Ovary (tissue), 10 donors: ENCODE measurements at regions of chr10 and their contacts with region 1.

Region 1: DNA sequence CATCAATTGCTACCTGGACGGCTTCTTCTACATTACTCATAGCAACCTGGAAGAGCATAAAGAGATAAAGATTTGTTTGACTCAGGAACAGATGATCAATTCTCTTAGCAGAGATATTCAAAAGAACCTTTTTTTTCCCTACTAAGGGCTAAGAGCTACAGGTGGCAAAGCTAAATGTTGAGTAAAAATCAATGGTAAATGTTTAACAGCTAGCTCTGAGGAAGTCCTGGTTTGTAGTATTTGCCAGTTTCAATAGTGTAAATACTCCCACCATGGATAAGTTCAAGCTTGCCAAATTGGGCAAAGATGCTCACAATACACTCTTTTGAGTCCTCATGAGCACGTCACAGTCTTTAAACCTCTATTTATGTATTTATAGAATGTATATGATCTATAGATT is 64.0 kb downstream of the AKR1E2 start:
- DNase-seq: no peak
- H3K4me3 ChIP-seq: no peak overlapping the region
- H3K27ac ChIP-seq: no peak overlapping the region
- H3K4me1 ChIP-seq: peaks cover 2% of the 10 kb centered on the region
- H3K27me3 ChIP-seq: peaks cover 2% of the 10 kb centered on the region
- CTCF ChIP-seq: no peak
- EP300 ChIP-seq: no peak
- POLR2A ChIP-seq: no peak

Region 2: GRCh38 chr10:4303048-4303447 is 586.9 kb before region 1 on chr10:
- intact Hi-C with region 1: no loop called
- DNase-seq: no peak
- H3K4me3 ChIP-seq: no peak overlapping the region
- H3K27ac ChIP-seq: no peak overlapping the region
- H3K4me1 ChIP-seq: peaks cover 5% of the 10 kb centered on the region
- H3K27me3 ChIP-seq: no peaks in the 10 kb centered on the region
- CTCF ChIP-seq: no peak
- EP300 ChIP-seq: no peak
- POLR2A ChIP-seq: no peak

Region 3: DNA sequence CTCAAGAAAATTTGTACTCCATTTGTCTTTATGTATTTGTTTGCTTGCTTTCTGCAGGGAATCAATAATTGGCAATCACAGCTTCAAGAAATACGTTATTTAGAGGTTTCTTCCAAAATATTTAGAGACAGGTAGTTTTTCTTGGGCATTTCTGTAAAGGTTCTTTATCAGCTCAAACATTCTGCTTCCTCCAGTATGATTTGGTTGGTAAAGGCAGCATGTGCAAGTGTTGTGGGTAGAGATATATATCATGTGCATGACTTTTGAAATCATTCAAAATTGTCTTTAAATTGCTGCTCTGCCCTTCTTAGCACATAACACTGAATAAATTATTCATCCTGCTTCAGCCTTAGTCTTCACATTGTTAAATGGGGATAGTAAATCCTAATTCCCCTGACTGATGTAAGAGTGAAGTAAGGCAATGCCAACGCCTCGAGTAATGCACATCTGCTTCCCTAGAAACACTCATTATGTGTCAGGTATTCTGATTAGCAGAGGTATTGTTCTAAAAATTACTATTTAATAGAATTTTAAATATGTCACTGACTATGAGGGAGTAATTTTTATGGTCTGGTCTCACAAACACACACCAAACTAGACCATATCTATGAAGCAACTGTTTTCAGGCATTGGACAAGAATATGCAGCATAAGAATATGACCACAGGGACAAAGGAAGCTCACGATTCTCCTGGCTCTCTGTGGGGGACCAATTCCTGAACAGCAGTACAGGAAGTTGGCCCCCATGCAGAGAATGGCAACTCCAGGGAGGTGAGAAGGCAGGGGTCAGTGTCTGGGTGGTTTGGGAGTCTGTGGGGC is 141.3 kb before region 1 on chr10:
- intact Hi-C with region 1: no loop called
- DNase-seq: no peak
- H3K4me3 ChIP-seq: no peak overlapping the region
- H3K27ac ChIP-seq: no peak overlapping the region
- H3K4me1 ChIP-seq: no peaks in the 10 kb centered on the region
- H3K27me3 ChIP-seq: no peaks in the 10 kb centered on the region
- CTCF ChIP-seq: no peak
- EP300 ChIP-seq: no peak
- POLR2A ChIP-seq: no peak

Region 4: DNA sequence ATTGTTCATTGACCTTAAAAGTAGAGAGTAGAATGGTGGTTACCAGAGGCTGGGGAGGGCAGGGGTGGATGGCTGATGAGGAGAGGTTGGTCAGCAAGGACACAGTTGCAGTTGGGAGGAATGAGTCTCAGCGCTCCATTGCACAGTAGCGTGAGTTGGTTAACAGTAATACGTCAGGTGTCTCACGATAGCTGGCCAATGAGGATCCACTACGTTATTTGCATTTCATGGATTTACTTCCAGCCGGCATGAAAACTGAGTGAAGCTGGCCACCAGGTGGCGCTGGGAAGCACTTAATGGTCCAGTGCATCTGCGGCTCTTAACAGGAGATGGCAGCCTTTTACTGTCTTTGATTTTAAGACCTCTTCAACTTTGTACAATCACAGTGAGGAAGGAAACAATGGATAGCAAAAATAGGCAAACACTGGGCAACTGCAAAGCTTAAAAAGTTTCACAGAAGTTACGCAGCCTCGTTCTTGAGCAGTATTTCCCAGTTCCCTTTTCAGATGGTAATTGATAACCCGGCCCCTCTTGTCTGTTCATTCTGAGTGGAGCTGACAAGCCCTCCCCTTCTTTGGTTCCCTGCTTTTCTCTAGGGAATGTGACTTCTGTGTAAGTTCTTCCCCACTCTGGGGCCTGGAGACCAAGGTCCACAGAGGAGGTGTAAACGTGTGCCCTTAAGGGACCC is 40.3 kb before region 1 on chr10:
- intact Hi-C with region 1: no loop called
- DNase-seq: peak; percentile 86 to 94 (median 93)
- H3K4me3 ChIP-seq: no peak overlapping the region
- H3K27ac ChIP-seq: no peak overlapping the region
- H3K4me1 ChIP-seq: peaks cover 1% of the 10 kb centered on the region
- H3K27me3 ChIP-seq: no peaks in the 10 kb centered on the region
- CTCF ChIP-seq: peak; percentile 87 to 99 (median 99)
- EP300 ChIP-seq: no peak
- POLR2A ChIP-seq: peak; percentile 32

Region 5: GRCh38 chr10:4867520-4868356 is 22.2 kb before region 1 on chr10:
- intact Hi-C with region 1: loop called in 1 of 4 experiments (anchors 2 kb)
- DNase-seq: no peak
- H3K4me3 ChIP-seq: no peak overlapping the region
- H3K27ac ChIP-seq: peak overlapping the region in 1 of 2 donors; percentile 2
- H3K4me1 ChIP-seq: no peaks in the 10 kb centered on the region
- H3K27me3 ChIP-seq: no peaks in the 10 kb centered on the region
- CTCF ChIP-seq: no peak
- EP300 ChIP-seq: no peak
- POLR2A ChIP-seq: no peak

Region 6: DNA sequence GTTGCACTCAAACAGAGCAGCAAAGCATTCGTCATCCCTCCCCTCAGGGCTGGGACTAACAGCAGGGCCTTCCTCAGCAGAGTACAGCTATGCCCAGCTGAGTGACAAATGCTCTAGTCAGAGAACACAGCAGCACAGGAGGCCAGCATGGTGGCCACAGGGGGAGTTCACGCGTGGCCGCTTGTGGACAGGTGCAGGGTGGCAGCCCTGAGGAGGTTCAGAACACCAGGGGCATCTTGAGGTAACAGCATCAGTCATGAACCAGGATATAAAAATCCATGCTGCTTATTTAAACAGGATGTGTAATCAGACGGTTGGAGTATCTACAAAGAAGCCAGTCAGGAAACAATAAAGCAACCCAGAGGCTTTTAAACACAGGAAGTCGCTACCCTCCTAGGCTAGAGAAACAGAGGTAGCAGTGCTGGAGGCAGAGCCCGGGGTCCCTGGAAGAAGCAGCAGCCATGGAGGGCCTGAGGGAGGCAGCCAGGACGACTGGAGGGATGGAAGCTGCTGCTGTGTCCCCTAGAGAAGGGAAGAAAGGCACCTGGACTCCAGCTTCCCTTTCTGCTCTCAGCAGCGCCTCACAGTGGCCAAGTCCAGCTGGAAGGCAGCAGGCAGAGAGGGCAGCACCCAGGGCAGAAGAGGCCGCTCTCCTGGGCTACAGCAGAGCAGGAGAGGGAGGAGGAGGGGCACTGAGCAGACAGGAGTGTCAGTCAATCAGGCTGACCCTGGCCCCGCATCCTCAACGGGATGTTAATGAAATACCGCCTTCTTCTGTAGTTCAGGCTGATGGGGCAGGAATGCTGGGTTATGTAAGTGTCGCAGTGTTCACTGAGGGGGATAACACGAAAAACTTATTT is 404.0 kb after region 1 on chr10:
- intact Hi-C with region 1: no loop called
- DNase-seq: peak in 1 of 5 donors; percentile 43
- H3K4me3 ChIP-seq: no peak overlapping the region
- H3K27ac ChIP-seq: no peak overlapping the region
- H3K4me1 ChIP-seq: no peaks in the 10 kb centered on the region
- H3K27me3 ChIP-seq: no peaks in the 10 kb centered on the region
- CTCF ChIP-seq: no peak
- EP300 ChIP-seq: no peak
- POLR2A ChIP-seq: no peak